Vagina (tissue), 2 donors: ENCODE measurements at regions of chr15 and their contacts with region 1.

Region 1: GRCh38 chr15:34209421-34210282 is at the start of gene KATNBL1:
- DNase-seq: peak in 1 of 2 donors; percentile 91
- H3K4me3 ChIP-seq: peak within 1 kb of the TSS; percentile 67 to 69
- H3K27ac ChIP-seq: peak within 1 kb of the TSS; percentile 72
- H3K4me1 ChIP-seq: peaks cover 22% of the 10 kb centered on the region
- H3K27me3 ChIP-seq: no peaks in the 10 kb centered on the region
- CTCF ChIP-seq: peak; percentile 85 to 94 (median 92)
- POLR2A ChIP-seq: peak; percentile 28 to 75
- total RNA-seq, gene KATNBL1: 50.3 TPM

Region 2: GRCh38 chr15:34064438-34064837 is 145.2 kb before region 1 on chr15:
- intact Hi-C with region 1: loop called (anchors 5 kb)
- DNase-seq: no peak
- H3K4me3 ChIP-seq: no peak overlapping the region
- H3K27ac ChIP-seq: no peak overlapping the region
- H3K4me1 ChIP-seq: peaks cover 6% of the 10 kb centered on the region
- H3K27me3 ChIP-seq: no peaks in the 10 kb centered on the region
- CTCF ChIP-seq: no peak
- POLR2A ChIP-seq: no peak

Region 3: DNA sequence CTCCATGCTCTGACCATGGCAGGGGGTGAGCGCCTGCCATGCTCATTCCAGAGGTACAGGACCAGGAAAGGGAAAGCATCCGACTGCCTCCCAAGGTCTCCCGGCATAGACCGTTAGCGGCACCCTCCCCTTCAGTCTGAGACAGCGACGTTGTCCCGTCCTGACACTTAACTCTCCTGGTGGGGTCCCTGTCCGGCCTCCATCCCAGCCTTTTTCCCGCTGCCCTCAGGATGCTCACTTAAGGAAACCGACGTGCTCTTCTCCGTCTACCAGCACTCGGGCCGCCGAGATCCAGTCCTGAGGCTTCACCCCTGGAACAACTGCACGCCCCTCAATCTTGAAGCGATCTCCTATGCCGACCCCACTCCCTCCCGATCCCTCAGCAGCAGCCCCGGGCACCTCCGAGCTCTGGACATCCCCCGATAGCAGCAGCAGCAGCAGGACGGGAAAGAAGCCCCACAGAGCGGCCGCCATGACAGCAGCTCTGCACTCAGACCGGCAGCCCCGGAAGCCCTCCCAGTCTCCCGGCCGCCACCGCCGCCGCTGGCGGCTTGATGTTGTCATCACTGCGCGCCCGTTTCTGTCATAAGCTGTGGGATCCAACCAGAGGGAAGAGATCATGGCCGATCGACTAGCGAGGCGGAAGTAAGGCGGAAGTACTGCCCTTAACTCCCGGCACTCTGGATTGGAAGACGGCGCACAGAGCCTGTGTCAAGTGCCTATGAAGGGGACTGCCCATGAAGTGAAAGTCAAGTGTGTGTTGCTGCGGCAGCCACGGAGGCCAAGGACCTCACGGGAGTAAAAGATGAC is 108.1 kb before region 1 on chr15 and contains the starts of genes EMC7 and PGBD4:
- intact Hi-C with region 1: loop called (anchors 5 kb)
- DNase-seq: peak; percentile 98 to 100
- H3K4me3 ChIP-seq: peak within 1 kb of the TSS; percentile 85 to 98
- H3K27ac ChIP-seq: peak within 1 kb of the TSS; percentile 59
- H3K4me1 ChIP-seq: peaks cover 27% of the 10 kb centered on the region
- H3K27me3 ChIP-seq: no peaks in the 10 kb centered on the region
- CTCF ChIP-seq: peak in 1 of 3 experiments; percentile 9
- POLR2A ChIP-seq: no peak
- total RNA-seq, gene EMC7: 31.4 TPM
- total RNA-seq, gene PGBD4: 1.5 TPM

Region 4: GRCh38 chr15:34520566-34520965 is 310.9 kb after region 1 on chr15:
- intact Hi-C with region 1: no loop called
- DNase-seq: no peak
- H3K4me3 ChIP-seq: no peak overlapping the region
- H3K27ac ChIP-seq: no peak overlapping the region
- H3K4me1 ChIP-seq: no peaks in the 10 kb centered on the region
- H3K27me3 ChIP-seq: no peaks in the 10 kb centered on the region
- CTCF ChIP-seq: no peak
- POLR2A ChIP-seq: no peak